ENCODE measurements at regions of chr3 and their contacts with region 1.

Region 1: GRCh38 chr3:176939022-176939817 is 258.1 kb downstream of the TBL1XR1 start:
- DNase-seq: no peak
- H3K4me3 ChIP-seq: no peak overlapping the region
- H3K27ac ChIP-seq: no peak overlapping the region
- H3K4me1 ChIP-seq: no peaks in the 10 kb centered on the region
- H3K27me3 ChIP-seq: no peaks in the 10 kb centered on the region
- CTCF ChIP-seq: peak in 2 of 3 experiments; percentile 72 to 81; a peak in 3 of 4 replicates
- EP300 ChIP-seq: no peak
- POLR2A ChIP-seq: no peak
- RAD21 ChIP-seq: peak; percentile 95 to 96

Region 2: GRCh38 chr3:176514297-176514696 is 424.9 kb before region 1 on chr3:
- CTCF ChIA-PET with region 1: interaction called, 35 read pairs
- POLR2A ChIA-PET with region 1: no interaction called
- DNase-seq: peak; percentile 47 to 80
- H3K4me3 ChIP-seq: no peak overlapping the region
- H3K27ac ChIP-seq: no peak overlapping the region
- H3K4me1 ChIP-seq: peaks cover 0 to 7% (median 0%) of the 10 kb centered on the region in 4 experiments; a peak in 1 of 7 replicates
- H3K27me3 ChIP-seq: no peaks in the 10 kb centered on the region
- CTCF ChIP-seq: peak; percentile 45 to 81 (median 69)
- EP300 ChIP-seq: no peak
- POLR2A ChIP-seq: no peak
- RAD21 ChIP-seq: peak; percentile 97 to 98